GM13976 (cell line): ENCODE measurements at regions of chr1 and their contacts with region 1.

Region 1: GRCh38 chr1:109667452-109668122 is at the start of gene GSTM2:
- DNase-seq: peak; percentile 88
- CTCF ChIP-seq: no peak

Region 2: DNA sequence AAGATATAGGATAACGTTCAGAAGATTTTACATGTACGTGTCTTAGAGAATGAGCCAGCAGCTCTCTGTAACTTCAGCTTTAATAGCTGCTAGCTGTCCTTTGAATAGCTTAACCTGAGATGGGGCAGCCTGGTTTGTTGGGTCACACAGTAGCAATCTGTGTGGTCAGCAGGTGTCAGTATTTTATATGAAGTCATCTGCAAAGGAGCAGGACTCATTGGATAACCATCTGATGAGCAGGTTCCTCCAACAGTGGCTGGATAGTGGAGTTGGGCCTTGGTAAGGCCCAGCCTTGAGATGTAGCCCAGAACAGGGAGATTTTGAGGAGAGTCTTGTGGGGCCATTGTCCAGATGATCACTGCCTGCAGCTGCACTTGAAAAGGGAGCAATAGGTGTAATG is 50.9 kb after region 1 on chr1:
- in situ Hi-C with region 1: loop called (anchors 10 kb)
- DNase-seq: no peak
- CTCF ChIP-seq: no peak